WTC11 (cell line): ENCODE measurements at regions of chr3 and their contacts with region 1.

Region 1: DNA sequence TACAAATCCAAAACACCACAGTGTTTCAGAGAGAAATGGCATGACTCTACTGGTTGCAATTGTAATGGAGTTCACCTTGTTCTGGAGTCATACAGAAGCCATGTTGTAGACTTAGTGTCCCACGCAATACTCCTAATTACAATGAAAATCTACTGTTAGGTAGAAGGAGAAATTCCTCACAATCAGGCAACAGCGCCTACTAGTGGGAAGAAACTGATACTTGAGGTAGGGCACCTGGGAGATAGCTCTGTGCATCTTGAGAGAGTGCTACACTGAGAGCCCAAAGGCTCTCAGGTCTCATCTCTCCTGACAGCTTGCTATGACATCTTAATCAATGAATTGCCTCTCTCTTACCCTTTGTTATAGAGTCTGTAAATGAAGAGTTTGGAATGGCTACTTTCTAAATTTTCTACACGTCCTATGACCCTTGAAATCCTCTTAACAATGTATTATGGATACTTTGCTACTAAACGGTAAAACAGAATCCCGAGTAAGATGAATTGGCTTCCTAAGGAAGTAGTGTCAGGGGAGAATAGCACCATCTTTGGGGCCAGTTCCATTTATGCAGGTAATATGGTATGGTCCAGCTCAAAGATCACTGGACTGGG is 422.7 kb upstream of the TPRG1 start:
- DNase-seq: peak; percentile 60
- ATAC-seq: peak; percentile 95
- H3K4me3 Mint-ChIP-seq: no peak overlapping the region
- H3K27ac Mint-ChIP-seq: no peak overlapping the region
- H3K4me1 Mint-ChIP-seq: no peaks in the 10 kb centered on the region
- H3K27me3 Mint-ChIP-seq: no peaks in the 10 kb centered on the region
- CTCF ChIP-seq: peak; percentile 76

Region 2: DNA sequence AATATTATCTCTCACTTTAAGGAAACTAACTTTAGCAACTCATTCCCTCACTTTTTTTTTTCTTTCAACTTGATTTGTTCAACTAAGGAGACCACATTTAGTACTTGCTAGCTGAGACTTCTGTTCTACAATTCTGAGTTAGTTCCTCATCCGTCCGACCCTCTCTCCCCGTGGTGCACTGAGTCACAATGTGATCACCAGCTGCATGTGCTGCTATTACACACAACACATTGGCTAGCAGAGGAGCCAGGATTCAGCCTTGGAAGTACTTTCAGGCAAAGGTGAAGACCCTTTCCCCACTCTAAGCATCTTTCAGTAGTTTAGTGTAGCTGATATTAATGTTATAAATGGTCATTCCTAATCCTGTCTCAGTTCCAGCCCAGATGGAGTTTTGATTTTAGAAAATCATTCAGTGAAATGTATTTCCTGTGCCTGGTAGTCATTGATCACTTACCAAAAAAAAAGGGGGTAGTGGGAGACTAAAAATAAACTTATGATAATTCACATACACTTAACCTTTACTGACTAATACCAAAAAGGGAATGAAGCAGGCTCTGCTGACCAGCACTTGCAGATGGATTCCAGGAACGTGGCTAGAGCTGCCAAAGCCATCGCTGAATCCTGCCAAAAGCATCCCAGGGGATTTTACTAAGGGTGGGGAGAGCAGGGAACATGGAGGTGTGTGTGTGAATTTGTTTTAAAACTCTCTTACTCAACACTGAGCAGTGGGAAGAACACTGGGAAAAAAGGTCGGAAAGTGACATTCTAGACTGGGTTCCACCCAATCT is 170.3 kb before region 1 on chr3:
- CTCF ChIA-PET with region 1: no interaction called
- POLR2A ChIA-PET with region 1: no interaction called
- DNase-seq: no peak
- ATAC-seq: no peak
- H3K4me3 Mint-ChIP-seq: no peak overlapping the region
- H3K27ac Mint-ChIP-seq: no peak overlapping the region
- H3K4me1 Mint-ChIP-seq: peaks cover 3% of the 10 kb centered on the region; the same call in 1 of the 2 replicates
- H3K27me3 Mint-ChIP-seq: no peaks in the 10 kb centered on the region
- CTCF ChIP-seq: no peak

Region 3: DNA sequence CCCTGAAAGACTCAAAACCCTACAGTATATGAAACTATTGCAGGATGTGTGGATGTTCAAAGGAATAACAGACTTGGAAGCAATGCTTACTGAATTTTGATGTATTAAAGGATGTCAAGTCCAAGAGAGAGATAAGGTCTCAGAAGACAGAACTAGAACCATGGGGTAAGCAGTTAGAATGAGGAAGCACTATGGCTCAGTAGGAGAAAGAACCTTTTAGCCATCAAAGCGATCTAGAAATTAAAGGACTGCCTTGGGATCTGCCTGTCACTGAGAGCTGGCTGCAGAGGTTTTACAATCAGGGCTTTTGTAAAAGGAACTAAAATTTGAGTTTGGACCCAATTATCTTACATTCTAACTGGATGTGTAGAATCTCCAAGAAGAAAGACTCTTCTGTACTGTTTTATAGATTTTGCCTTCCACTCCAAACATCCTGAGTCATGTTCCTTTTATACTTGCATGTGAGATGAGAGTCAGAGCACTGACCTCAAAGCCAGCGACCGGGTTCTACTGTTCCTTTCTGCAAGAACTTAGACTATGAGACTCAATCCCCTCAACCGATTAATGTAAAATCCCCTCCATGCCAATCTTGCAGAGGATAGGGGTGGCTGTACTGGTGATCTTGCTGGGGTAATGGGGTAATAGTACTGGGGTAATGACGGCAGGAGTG is 10.4 kb after region 1 on chr3:
- CTCF ChIA-PET with region 1: interaction called, 16 read pairs
- POLR2A ChIA-PET with region 1: no interaction called
- DNase-seq: no peak
- ATAC-seq: no peak
- H3K4me3 Mint-ChIP-seq: no peak overlapping the region
- H3K27ac Mint-ChIP-seq: no peak overlapping the region
- H3K4me1 Mint-ChIP-seq: no peaks in the 10 kb centered on the region
- H3K27me3 Mint-ChIP-seq: no peaks in the 10 kb centered on the region
- CTCF ChIP-seq: no peak

Region 4: DNA sequence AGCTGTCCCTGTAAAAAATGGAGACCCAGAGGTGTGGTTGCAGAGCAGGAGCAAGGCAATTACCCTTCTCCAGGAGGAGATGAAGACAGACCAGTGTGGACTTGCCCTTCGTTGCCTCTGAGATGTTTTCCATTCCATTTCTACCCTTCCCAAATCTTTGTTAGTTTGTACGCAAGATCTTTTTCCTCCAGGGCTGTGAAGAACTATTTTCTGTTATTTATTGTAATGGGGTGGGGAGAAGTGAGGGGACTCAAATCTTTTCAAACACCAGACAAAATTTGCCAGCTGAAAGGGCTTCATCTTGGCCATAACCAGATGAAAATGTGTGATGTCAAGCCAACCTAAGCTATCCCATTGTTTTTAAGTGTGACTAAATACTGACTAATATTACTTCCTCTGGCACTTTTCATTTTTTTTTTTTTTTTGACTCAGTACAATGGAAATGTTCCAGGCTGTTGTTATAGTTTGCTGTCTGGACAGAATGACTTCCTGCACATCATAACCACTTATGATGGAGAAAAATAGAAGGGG is 151.4 kb after region 1 on chr3:
- CTCF ChIA-PET with region 1: no interaction called
- POLR2A ChIA-PET with region 1: no interaction called
- DNase-seq: no peak
- ATAC-seq: no peak
- H3K4me3 Mint-ChIP-seq: no peak overlapping the region
- H3K27ac Mint-ChIP-seq: no peak overlapping the region
- H3K4me1 Mint-ChIP-seq: peaks cover 10% of the 10 kb centered on the region
- H3K27me3 Mint-ChIP-seq: no peaks in the 10 kb centered on the region; the same call in 1 of the 2 replicates
- CTCF ChIP-seq: no peak

Region 5: DNA sequence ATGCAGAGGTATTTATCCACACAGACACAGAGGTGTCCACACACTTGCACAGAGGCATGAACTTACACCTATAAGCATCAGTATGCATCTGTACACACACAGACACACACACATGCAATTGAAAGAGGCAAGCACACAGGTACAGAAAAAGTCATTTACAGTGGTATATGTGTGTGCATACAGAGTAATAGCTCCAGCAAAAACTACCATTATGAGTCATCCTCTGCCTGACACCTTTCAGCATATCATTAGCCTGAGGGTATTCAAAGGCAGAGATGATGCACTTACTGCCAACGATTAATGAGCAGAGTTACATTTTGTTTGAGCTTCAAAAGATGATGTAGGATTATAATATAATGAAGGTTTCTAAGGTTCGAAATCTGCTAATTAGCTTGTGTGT is 322.3 kb after region 1 on chr3:
- CTCF ChIA-PET with region 1: no interaction called
- POLR2A ChIA-PET with region 1: no interaction called
- DNase-seq: no peak
- ATAC-seq: no peak
- H3K4me3 Mint-ChIP-seq: no peak overlapping the region
- H3K27ac Mint-ChIP-seq: no peak overlapping the region
- H3K4me1 Mint-ChIP-seq: no peaks in the 10 kb centered on the region
- H3K27me3 Mint-ChIP-seq: peaks cover 2% of the 10 kb centered on the region; the same call in 1 of the 2 replicates
- CTCF ChIP-seq: no peak